MCF 10A (cell line): ENCODE measurements at regions of chr11 and their contacts with region 1.

Region 1: DNA sequence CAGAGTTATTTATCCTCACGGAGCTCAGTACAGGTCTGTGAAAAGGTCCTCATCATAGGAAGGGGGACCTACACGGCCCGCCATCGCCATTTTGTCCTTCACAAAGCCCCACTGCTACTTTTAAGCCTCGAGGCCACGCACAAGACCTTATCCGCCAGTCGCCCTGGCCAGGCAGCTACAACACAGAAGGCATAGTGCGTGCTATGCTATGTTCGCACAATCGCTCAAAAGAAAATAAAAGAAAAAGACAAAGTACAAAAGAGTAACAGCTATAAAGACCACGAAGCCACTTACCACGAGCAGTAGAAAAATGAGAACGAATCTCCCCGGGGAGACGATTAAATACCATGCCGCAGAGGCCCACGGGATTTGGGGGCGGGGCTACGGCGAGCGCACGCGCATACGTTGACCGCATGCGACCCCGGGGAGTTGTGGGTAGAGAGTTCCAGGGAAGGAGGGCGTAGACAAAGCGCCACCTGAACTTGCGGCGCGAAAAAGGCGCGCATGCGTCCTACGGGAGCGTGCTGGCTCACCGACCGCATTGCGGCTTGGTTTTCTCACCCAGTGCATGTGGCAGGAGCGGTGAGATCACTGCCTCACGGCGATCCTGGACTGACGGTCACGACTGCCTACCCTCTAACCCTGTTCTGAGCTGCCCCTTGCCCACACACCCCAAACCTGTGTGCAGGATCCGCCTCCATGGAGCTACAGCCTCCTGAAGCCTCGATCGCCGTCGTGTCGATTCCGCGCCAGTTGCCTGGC is 16.4 kb upstream of the WDR74 start:
- DNase-seq: peak; percentile 98
- H3K4me3 Mint-ChIP-seq: peak overlapping the region; percentile 94
- H3K27ac Mint-ChIP-seq: peak overlapping the region; percentile 64
- H3K4me1 Mint-ChIP-seq: peaks cover 35% of the 10 kb centered on the region
- H3K27me3 Mint-ChIP-seq: no peaks in the 10 kb centered on the region
- CTCF ChIP-seq: no peak

Region 2: DNA sequence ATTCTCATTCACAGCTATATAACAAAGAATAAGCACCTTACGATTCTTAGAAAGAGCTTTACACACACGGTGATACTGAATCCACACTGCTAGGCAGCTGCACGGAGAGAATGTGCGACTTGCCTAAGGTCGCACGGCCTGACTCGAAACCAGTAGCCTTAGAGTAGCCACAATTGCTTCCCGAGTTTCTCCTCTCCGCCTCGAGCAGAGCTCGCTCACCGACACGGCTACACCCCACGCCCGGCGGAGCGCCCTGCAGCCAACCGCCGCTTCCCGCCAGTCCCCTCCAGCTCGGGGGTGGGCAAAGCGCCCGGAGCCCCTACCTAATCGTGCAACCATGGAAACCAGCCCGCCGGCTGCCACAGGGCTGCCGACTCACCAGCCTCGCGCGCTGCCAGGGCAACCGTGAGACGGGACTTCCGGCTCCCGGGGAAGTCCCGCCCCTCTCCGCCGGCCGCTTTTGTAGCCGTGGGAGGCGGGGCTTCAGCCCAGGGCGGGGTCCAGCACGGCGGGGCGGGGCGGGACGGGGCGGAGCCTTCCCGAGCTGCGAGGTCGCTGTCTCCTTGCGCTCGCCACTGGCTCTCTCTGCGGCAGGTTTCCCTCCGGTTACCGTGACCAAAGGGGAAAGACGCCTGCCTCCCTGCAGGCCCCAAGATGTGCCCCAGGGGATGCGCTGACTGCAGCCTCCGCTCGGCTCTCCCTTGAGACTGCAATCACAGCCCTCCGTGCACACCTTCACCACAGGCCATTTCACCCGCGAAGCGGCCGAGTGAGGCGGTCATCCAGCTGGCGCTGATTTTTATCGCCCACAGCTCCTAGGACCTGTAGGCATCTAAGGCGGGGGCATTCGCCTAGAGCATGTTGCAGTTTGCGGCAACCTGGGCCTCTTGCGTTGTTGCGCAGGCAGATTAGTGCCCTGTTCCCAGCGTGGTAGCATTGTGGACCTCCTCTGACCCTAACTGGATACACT is 149.6 kb before region 1 on chr11:
- CTCF ChIA-PET with region 1: interaction called, 3 read pairs
- POLR2A ChIA-PET with region 1: interaction called, 15 read pairs
- intact Hi-C with region 1: no loop called
- DNase-seq: peak; percentile 91
- H3K4me3 Mint-ChIP-seq: peak overlapping the region; percentile 92
- H3K27ac Mint-ChIP-seq: peak overlapping the region; percentile 94
- H3K4me1 Mint-ChIP-seq: peaks cover 25% of the 10 kb centered on the region
- H3K27me3 Mint-ChIP-seq: no peaks in the 10 kb centered on the region
- CTCF ChIP-seq: no peak

Region 3: DNA sequence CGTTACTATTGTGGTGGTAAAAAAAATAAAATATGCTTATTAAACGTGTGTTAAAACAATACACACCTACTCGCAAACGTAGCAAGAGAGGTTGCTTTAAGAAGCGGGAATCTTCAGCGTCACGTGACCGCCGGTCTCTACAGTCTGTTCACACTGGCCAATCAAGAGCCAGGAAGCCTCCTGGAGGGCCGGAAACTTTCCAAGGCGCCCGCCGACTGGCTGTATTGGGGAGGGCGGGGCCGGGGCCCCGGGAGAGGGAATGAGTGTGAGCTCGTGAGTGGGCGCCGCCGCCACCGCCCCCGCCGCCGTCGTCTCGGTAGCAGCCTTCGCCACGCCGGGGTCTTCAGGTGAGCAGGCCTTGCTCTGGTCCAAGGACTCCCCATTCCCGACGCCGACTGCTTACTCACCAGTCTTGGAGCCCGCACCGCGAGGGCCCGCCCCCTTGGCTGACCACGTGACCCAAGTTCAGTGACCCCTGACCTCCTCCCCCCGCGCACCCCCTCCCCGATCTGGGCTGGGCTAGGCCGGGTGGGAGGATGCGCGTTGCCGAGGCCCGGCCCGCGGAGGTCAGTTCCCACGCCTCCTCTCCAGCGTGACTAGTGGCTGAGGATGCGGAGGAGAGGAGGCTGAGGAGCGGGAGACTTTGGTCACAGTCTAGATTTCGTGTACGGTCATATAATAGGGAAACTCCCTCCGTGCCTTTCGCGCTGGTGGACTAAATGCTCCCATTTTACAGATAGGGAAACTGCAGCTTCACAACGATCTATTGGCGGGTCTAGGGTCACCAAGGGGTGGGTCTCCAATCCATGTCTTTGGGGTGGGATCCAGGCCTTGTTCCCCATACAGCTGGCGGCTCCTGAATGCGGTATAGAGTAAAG is 84.4 kb before region 1 on chr11 and contains the start of gene TAF6L:
- CTCF ChIA-PET with region 1: no interaction called
- POLR2A ChIA-PET with region 1: interaction called, 24 read pairs
- intact Hi-C with region 1: no loop called
- DNase-seq: peak; percentile 98
- H3K4me3 Mint-ChIP-seq: peak within 1 kb of the TSS; percentile 98
- H3K27ac Mint-ChIP-seq: peak within 1 kb of the TSS; percentile 95
- H3K4me1 Mint-ChIP-seq: peaks cover 5% of the 10 kb centered on the region
- H3K27me3 Mint-ChIP-seq: no peaks in the 10 kb centered on the region
- CTCF ChIP-seq: no peak
- total RNA-seq, gene TAF6L: 11.6 and 12.0 TPM in 2 replicates

Region 4: DNA sequence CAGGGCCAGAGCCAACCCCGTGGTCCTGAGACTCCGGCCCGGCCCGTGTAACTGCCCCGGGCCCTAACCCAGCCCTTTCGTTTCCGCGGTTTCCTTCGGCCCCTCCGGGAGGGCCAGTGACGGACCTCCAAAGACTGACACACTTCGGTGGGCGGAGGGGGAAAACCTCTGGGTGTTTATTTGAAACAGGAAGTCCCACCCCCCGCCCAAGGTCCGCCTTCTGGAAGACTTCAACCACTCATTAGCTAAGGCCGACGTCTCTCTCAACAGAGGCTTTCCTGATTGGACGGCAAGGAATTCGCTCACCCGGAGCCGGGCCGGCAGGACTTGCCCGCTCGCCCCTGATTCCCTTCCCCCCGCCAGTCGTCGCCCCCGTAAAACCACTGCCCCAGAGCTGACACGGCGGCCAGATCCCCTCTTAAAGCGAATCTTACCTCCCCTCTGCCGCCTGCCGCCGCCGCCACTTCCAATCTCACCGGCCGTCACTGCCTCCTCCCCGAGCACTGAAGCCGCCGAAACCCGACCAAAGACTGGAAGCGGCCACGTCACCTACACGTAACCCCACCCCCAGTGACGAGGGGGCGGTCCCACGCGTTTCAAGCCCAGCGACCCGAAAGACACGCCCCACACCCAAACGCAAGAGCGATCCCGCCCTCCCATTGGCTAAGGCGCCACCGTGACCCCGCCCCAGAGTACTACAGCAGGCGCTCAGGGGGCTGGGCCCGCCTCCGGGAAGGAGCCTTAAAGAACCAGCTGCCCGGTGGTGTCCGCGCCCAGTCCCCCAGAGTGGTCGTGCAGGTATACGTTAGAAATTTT is 24.0 kb before region 1 on chr11 and contains the start of gene STX5:
- CTCF ChIA-PET with region 1: interaction called, 3 read pairs
- POLR2A ChIA-PET with region 1: interaction called, 105 read pairs
- intact Hi-C with region 1: no loop called
- DNase-seq: peak; percentile 98
- H3K4me3 Mint-ChIP-seq: peak within 1 kb of the TSS; percentile 89
- H3K27ac Mint-ChIP-seq: peak within 1 kb of the TSS; percentile 99
- H3K4me1 Mint-ChIP-seq: peaks cover 31% of the 10 kb centered on the region
- H3K27me3 Mint-ChIP-seq: no peaks in the 10 kb centered on the region
- CTCF ChIP-seq: no peak
- total RNA-seq, gene STX5: 71.8 and 72.0 TPM in 2 replicates